Cardiac septum (tissue), 1 donor: ENCODE measurements at regions of chr1 and their contacts with region 1.

Region 1: DNA sequence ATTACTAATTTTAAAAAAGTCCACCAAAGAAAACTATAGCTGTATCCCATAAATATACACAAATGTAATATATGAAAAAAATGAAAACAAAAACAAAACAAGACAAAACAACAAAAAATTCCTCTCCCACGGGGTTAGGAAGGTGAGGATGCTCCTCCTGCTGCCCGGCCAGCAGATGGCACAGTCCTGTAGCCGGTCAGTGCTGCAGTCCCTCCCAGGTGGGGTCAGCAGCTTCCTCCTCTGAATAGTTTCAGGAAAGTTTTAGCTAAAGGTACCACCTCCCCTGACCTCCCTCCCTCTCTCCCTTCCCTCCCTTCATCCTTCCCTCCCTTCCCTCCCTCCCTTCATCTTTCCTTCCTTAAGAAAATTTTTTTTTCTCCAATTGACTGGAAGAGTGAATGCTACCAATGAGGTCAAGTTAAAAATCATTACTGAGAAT is 67.8 kb upstream of the BCL10 start:
- DNase-seq: no peak

Region 2: DNA sequence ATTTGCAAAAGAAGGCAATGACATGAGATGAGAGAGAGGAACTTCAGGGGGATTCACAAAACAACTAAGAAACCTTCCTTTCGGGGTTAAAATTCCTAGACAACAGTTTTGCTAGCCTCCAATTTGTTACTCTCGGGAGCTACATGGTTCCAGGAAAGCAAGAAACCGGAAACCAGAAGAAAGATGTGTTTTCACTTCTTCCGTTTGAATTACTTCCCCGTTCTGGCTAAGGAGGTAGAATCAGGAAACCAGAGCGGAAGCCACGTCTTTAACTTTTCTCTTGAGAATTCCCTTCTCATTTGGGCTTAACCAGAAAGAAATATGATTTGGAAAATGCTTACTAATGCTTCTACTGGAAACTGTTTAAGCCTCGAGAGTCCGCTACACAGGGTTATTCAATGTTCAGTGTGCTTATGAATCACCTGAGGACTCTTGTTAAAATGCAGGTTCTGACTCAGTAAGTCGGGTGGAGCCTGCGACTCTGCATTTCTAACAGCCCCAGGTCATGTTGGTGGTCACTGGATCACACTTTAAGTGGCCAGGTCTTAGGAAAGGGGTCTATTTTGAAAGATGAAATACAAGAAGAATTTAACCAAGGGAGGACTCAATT is 252.5 kb before region 1 on chr1:
- intact Hi-C with region 1: no loop called
- DNase-seq: no peak

Region 3: DNA sequence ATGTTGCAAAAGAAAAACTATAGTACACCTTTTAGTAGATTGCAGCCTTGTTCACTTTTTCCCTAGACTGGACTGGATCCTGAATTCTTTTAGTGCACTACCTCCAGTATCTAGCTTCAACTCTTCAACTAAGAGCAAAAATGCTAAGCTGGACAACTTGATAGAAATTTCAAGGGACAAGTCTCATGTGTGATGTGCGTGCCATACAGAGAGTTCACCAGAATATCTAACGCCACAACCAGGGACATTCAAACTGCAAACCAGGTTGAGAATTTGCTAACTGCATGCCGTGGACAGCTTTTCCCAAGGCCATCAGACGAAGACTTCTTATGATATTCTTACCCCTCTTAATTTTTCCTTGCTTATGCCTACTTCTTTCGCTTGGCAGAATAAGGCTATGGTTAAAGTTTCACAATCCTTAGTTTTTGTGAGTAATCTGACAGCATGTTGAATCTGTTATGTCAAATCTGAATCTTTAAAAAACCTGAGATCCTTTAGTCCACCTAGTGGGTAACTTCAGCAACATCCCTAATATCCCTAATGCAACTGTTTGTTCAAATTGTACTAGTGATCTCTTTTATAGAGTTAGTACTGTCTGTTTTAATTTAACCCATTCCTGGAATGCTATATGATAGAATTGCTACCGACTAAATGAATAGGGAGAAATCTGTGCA is 54.3 kb after region 1 on chr1:
- intact Hi-C with region 1: loop called (anchors 10 kb)
- DNase-seq: no peak